Mammary epithelial cell (primary cell): ENCODE measurements at regions of chr2 and their contacts with region 1.

Region 1: DNA sequence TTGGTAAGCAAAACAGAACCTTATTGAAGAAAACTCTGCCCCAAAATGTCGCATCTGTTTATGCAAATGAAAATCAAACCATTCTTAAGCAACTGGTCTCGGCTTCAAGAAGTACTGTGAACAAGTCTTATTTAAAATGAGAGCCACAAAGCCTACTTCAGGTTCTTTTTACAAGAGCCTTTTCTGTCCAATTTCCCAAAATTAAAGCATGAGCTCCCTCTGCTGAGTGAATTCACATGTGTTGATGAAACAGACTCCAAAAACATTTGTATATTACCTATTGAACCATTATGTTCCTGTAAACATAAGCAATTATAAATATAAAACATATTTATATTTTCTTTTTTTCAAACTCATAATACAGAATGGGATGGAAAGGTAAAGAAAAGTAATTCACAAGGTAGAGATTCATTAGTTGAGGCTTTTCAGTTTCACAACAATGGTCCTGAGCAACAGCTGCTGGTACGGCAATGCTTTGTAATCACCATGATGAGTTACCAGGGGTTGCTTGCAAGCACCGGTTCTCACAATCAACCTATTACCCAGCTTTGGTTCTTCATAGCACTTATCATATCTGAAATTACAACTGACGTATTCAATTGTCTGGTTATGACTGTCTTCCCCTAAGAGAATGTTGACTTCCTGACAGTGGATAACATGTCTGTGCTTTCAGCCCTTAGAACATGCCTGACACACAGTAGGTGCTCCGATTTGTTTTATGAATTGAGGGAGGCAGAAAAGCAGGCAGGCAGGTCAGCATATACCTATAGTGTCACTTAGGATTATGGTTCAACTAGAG is 108.4 kb upstream of the BZW1 start:
- DNase-seq: peak; percentile 51
- H3K4me3 ChIP-seq: no peak overlapping the region
- H3K27ac ChIP-seq: no peak overlapping the region
- H3K4me1 ChIP-seq: no peaks in the 10 kb centered on the region
- H3K27me3 ChIP-seq: no peaks in the 10 kb centered on the region
- CTCF ChIP-seq: peak; percentile 49 to 56

Region 2: GRCh38 chr2:199979832-199980628 is 723.3 kb before region 1 on chr2:
- CTCF ChIA-PET with region 1: no interaction called
- dilution Hi-C with region 1: no loop called
- in situ Hi-C with region 1: loop called in 1 of 2 experiments (anchors 25 kb)
- intact Hi-C with region 1: loop called (anchors 1 kb)
- DNase-seq: peak; percentile 72
- H3K4me3 ChIP-seq: no peak overlapping the region
- H3K27ac ChIP-seq: no peak overlapping the region
- H3K4me1 ChIP-seq: peaks cover 31% of the 10 kb centered on the region
- H3K27me3 ChIP-seq: no peaks in the 10 kb centered on the region
- CTCF ChIP-seq: peak; percentile 78 to 82

Region 3: GRCh38 chr2:200483729-200484198 is 219.6 kb before region 1 on chr2:
- CTCF ChIA-PET with region 1: interaction called, 47 read pairs
- dilution Hi-C with region 1: no loop called
- in situ Hi-C with region 1: no loop called
- intact Hi-C with region 1: loop called (anchors 1 kb)
- DNase-seq: peak; percentile 62
- H3K4me3 ChIP-seq: no peak overlapping the region
- H3K27ac ChIP-seq: no peak overlapping the region
- H3K4me1 ChIP-seq: peaks cover 27% of the 10 kb centered on the region
- H3K27me3 ChIP-seq: no peaks in the 10 kb centered on the region
- CTCF ChIP-seq: peak; percentile 59 to 81

Region 4: GRCh38 chr2:200618587-200619021 is 84.7 kb before region 1 on chr2:
- CTCF ChIA-PET with region 1: interaction called, 3 read pairs
- dilution Hi-C with region 1: no loop called
- in situ Hi-C with region 1: no loop called
- intact Hi-C with region 1: loop called (anchors 1 kb)
- DNase-seq: no peak
- H3K4me3 ChIP-seq: no peak overlapping the region
- H3K27ac ChIP-seq: no peak overlapping the region
- H3K4me1 ChIP-seq: peaks cover 22% of the 10 kb centered on the region
- H3K27me3 ChIP-seq: no peaks in the 10 kb centered on the region
- CTCF ChIP-seq: peak in 1 of 2 donors; percentile 30

Region 5: GRCh38 chr2:200735061-200735460 is 31.7 kb after region 1 on chr2:
- CTCF ChIA-PET with region 1: no interaction called
- dilution Hi-C with region 1: loop called (anchors 5 kb)
- in situ Hi-C with region 1: no loop called
- intact Hi-C with region 1: loop called (anchors 1 kb)
- DNase-seq: no peak
- H3K4me3 ChIP-seq: no peak overlapping the region
- H3K27ac ChIP-seq: no peak overlapping the region
- H3K4me1 ChIP-seq: peaks cover 3% of the 10 kb centered on the region
- H3K27me3 ChIP-seq: no peaks in the 10 kb centered on the region
- CTCF ChIP-seq: no peak

Region 6: DNA sequence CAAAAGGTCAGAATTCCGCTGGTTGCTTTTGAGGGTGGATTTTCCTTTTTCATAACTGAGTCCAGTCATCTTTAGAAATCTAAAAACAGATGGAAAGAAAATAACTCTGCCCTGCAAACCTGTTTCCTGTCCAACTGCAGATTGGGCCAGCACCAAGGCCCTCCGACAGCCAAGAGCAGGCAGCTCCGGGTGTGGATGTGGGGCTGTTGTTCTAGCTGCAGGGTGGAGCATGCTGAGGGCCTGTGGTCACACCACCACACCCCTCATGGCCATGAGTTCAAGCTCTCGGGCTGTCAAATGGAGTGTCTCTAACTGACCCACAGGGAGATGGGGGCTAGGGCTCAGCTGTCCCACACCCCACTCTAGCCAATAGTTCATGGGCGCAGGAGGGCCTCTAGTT is 39.1 kb after region 1 on chr2:
- CTCF ChIA-PET with region 1: no interaction called
- dilution Hi-C with region 1: loop called (anchors 5 kb)
- in situ Hi-C with region 1: no loop called
- intact Hi-C with region 1: no loop called
- DNase-seq: no peak
- H3K4me3 ChIP-seq: no peak overlapping the region
- H3K27ac ChIP-seq: no peak overlapping the region
- H3K4me1 ChIP-seq: no peaks in the 10 kb centered on the region
- H3K27me3 ChIP-seq: no peaks in the 10 kb centered on the region
- CTCF ChIP-seq: no peak